ENCODE measurements at regions of chr20 and their contacts with region 1.

Region 1: GRCh38 chr20:58286729-58287128 is 22.8 kb upstream of the RAB22A start:
- DNase-seq: no peak
- ATAC-seq: no peak
- H3K4me3 ChIP-seq: no peak overlapping the region
- H3K27ac ChIP-seq: no peak overlapping the region
- H3K4me1 ChIP-seq: no peaks in the 10 kb centered on the region
- H3K27me3 ChIP-seq: no peaks in the 10 kb centered on the region
- CTCF ChIP-seq: no peak

Region 2: DNA sequence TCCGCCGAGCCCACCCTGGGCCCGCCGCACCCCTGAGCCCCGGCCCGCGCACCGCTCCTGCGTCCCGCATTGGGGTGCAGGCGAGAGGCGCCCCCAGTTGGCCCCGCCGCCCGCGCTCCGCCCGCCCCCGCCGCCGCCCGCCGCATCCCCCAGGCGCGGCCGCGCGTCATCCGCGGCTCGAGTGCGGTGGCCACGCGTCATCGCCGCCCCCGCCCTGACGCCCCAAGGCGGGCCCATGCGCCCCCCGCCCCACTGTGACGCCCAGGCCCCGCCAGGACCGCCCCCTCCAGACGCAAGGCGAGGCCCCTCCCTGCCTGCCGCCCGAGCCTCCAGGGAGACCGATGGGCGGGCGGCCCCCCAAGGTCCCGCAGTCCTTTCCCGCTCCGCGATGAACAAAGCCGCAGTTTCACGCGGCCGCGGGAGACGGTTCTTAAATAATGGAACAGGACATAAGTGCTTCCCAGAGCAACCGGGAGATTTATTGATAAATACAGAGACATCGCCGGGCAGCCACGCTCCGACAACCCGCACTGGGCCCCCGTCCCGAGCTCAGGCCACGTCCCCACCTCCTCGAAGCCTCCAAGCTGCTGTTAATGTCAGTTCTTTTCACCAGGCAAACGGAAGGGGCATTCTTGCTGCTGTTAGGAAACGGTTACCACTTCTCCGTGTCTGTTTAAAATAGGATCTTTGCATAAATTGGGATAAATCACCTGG is 58.1 kb before region 1 on chr20 and contains the start of gene ANKRD60:
- CTCF ChIA-PET with region 1: no interaction called
- POLR2A ChIA-PET with region 1: no interaction called
- in situ Hi-C with region 1: no loop called
- intact Hi-C with region 1: no loop called
- DNase-seq: no peak
- ATAC-seq: no peak
- H3K4me3 ChIP-seq: no peak within 1 kb of the TSS
- H3K27ac ChIP-seq: no peak within 1 kb of the TSS
- H3K4me1 ChIP-seq: no peaks in the 10 kb centered on the region
- H3K27me3 ChIP-seq: no peaks in the 10 kb centered on the region
- CTCF ChIP-seq: no peak
- total RNA-seq, gene ANKRD60: not detected

Region 3: GRCh38 chr20:58471193-58472164 is 184.8 kb after region 1 on chr20:
- CTCF ChIA-PET with region 1: no interaction called
- POLR2A ChIA-PET with region 1: interaction called, 11 read pairs
- in situ Hi-C with region 1: no loop called
- intact Hi-C with region 1: no loop called
- DNase-seq: no peak
- ATAC-seq: peak; percentile 45; the same call in 1 of the 2 replicates
- H3K4me3 ChIP-seq: no peak overlapping the region
- H3K27ac ChIP-seq: no peak overlapping the region
- H3K4me1 ChIP-seq: no peaks in the 10 kb centered on the region
- H3K27me3 ChIP-seq: no peaks in the 10 kb centered on the region
- CTCF ChIP-seq: no peak